Posterior cingulate gyrus (tissue), 11 donors: ENCODE measurements at regions of chr7 and their contacts with region 1.

Region 1: GRCh38 chr7:140003913-140004382 is 58.8 kb downstream of the PARP12 start:
- DNase-seq: peak in 1 of 10 donors; percentile 37

Region 2: DNA sequence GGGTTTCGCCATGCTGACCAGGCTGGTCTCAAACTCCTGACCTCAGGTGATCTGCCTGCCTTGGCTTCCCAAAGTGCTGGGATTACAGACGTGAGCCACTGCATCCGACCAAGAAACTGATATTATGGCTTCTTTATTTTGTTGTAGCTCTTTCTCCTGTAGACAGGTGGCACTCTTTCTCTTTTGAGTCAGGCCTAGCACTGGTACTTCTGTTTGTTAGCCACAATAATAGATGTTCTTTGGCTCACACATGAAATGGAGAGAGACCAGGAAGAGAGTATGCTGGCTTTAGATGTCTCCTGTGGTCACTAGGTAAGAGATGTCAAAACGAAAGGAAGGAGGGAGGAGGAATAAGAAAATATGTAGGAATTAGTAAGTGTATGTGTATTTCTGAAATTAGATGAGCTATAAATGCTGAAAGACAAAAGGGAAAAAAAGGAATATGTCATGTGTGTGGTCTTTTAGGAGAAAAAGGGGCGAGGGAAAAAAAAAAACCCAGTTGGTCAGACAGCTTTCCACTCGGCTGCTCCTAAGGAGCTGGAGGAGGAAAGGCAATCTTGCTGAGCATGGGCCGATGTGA is 401.7 kb before region 1 on chr7:
- intact Hi-C with region 1: loop called (anchors 5 kb)
- DNase-seq: no peak

Region 3: GRCh38 chr7:139626817-139627216 is 377.1 kb before region 1 on chr7:
- intact Hi-C with region 1: no loop called
- DNase-seq: no peak

Region 4: DNA sequence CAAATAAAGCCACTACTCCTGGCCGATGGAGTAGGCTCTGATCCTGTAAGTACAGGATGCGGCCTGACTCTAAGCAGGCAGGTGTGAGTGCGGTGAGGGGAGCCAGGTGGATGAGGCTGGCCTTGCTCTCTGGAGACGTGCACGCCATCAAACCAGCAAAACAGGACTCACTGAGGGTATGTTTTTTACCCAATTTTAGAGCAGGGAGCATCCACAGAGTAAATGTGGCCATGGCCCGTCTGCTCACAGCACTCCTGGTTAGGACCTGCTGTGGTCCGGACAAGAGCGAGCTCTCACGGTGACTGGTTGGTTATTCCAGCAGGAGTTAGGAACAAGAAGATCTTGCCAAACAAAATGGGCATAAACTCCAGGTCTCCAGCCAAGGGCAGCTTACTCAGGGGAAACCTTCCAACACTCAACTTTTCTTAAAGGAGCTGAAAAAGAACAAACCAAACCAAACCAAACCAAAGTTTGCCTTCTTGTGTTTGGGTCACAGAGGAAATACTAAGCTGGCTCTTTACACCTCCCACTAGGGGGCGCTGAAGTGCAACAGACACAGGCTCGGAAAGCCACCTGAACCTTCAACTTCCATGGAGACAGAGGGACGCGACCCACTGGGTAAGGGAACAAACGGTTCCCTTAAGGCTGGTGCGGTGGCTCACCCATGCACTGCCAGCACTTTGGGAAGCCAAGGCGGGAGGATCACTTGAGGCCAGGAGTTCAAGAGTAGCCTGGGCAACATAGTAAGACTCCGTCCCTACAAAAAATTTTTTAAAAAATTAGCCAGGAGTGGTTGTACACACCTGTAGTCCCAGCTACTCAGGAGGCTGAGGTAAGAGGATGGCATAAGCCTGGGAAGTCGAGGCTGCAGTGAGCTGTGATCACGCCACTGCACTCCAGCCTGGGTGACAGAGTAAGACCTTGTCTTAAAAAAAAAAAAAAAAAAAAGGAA is 358.1 kb before region 1 on chr7:
- intact Hi-C with region 1: loop called (anchors 1 kb)
- DNase-seq: peak; percentile 68 to 97 (median 88)

Region 5: GRCh38 chr7:140059273-140060242 is 55.6 kb after region 1 on chr7:
- intact Hi-C with region 1: loop called (anchors 10 kb)
- DNase-seq: no peak

Region 6: GRCh38 chr7:140284062-140284461 is 280.1 kb after region 1 on chr7:
- intact Hi-C with region 1: no loop called
- DNase-seq: peak in 1 of 10 donors; percentile 24